K562 (cell line): ENCODE measurements at regions of chr6 and their contacts with region 1.

Region 1: DNA sequence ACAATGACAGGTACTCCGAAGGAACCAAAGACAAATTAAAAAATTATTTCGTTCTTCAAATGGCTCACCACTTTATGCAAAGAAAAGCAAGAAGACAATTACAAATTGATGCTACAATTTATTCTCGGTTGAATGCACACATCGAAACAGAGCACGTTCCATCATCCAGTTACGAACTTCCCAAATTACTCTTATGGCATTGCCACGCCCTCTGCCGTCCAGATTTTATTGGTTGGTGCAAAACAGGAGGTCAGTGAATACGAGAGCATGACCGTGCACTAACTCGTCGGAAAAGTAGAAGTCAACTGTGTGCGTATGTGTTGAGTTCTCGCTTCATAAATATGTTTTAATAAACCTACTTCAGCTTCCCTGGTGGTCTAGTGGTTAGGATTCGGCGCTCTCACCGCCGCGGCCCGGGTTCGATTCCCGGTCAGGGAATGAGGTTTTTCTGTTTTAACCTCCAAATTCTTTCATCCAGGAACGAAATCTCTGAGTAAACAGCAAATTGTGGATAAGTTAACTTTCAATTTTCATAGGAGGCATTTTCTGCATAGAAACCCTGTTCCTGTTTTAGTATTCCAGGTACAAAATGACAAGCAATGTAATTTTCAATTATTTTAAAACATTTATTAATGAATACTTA is 23.2 kb downstream of the ZNF311 start:
- DNase-seq: peak; percentile 83 to 94 (median 83)
- ATAC-seq: peak; percentile 64
- H3K4me3 ChIP-seq: peak overlapping the region; percentile 56
- H3K27ac ChIP-seq: peak overlapping the region; percentile 97
- H3K4me1 ChIP-seq: peaks cover 24 to 30% of the 10 kb centered on the region in 2 experiments
- H3K27me3 ChIP-seq: no peaks in the 10 kb centered on the region
- CTCF ChIP-seq: peak; percentile 35 to 63 (median 48); a peak in 5 of 6 replicates
- EP300 ChIP-seq: peak; percentile 79
- POLR2A ChIP-seq: no peak
- RAD21 ChIP-seq: peak; percentile 36 to 63; a peak in 3 of 4 replicates

Region 2: DNA sequence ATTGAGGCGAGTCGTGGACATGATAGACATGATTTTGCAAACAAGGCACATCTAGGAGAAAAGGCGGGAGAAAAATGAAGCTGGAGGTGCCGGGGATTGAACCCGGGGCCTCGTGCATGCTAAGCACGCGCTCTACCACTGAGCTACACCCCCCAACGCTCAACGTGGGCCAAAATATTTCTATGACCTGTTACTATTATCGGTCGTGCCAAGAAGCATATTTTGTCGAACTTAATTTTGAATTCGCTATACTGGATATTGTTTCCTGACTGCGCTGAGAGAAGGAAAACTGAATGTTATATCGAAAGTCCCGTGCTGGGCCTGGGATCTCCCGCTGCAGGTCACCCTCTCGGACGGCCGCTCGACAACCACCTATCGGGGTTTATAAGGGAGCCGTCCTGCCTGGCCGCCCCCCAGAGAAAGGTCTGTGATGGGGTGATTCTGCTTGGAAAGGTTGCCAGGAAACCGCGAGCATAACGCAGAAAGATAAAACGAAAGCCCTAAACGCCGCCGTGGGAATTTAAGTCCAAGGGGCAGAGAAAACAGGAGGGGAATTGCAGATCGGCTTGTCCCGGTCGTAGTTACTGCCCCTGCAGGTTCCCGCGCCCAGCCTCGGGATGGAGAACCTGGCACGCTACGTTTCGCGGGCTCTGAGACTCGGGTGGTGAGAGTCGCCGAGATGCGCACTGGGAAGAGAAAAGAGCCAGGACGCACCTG is 118.2 kb before region 1 on chr6:
- CTCF ChIA-PET with region 1: no interaction called
- POLR2A ChIA-PET with region 1: interaction called, 4 read pairs
- in situ Hi-C with region 1: no loop called
- intact Hi-C with region 1: loop called (anchors 5 kb)
- DNase-seq: peak; percentile 64 to 92 (median 68)
- ATAC-seq: peak; percentile 72
- H3K4me3 ChIP-seq: peak overlapping the region; percentile 64
- H3K27ac ChIP-seq: peak overlapping the region; percentile 79
- H3K4me1 ChIP-seq: peaks cover 14 to 25% of the 10 kb centered on the region in 2 experiments; a peak in 4 of 5 replicates
- H3K27me3 ChIP-seq: no peaks in the 10 kb centered on the region
- CTCF ChIP-seq: 0 out of 6 replicates have a peak, but pooled peaks of 1 of the 3 experiments have one; percentile 61
- EP300 ChIP-seq: peak; percentile 76
- POLR2A ChIP-seq: peak; percentile 54; the same call in 1 of the 2 replicates
- RAD21 ChIP-seq: peak in 1 of 2 experiments; percentile 63; a peak in 3 of 4 replicates

Region 3: DNA sequence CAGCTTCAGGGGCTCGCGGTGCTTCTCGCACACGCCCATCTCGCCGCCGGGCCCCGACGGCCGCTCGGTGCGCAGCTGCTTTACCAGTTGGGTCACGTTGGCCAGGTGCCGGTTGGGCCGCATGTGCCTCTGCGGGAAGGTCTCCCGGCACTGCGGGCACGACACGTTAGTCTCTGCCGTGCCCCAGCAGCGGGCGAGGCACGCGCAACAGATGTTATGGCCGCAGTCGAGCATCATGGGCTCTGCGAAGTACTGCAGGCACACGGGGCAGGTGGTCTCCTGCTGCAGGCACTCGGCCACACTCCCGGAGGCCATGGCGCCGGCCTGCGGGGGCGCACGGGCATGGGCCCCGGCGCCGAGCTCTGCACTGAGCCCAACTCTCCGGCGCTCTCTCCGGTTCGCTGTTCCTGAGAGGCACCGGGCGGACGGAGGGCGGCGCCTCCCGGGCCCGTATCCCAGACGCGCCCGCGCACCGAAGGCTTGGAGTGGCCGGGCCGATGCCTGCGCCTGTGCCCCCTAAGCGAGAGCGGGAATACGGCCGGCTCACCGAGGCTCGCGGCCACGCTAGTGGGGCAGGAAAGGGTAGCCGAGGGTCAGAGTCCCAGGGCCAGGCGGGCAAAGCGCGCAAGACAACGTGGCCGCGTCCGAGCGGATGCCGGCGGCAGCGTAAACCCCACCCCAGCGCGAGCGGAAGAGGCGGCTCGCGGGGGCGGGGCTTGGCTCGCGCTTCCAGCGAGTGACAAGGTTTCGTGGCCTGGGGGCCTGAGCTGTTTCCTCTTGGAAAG is 58.4 kb before region 1 on chr6 and contains the start of gene TRIM27:
- CTCF ChIA-PET with region 1: no interaction called
- POLR2A ChIA-PET with region 1: interaction called, 10 read pairs
- in situ Hi-C with region 1: no loop called
- intact Hi-C with region 1: no loop called
- DNase-seq: peak; percentile 91 to 97 (median 92)
- ATAC-seq: peak; percentile 91
- H3K4me3 ChIP-seq: peak within 1 kb of the TSS; percentile 95
- H3K27ac ChIP-seq: peak within 1 kb of the TSS; percentile 97
- H3K4me1 ChIP-seq: peaks cover 26 to 32% of the 10 kb centered on the region in 2 experiments
- H3K27me3 ChIP-seq: no peaks in the 10 kb centered on the region
- CTCF ChIP-seq: no peak
- EP300 ChIP-seq: no peak
- POLR2A ChIP-seq: peak; percentile 98
- RAD21 ChIP-seq: no peak
- polyA plus RNA-seq, gene TRIM27: 37.7 to 49.6 TPM

Region 4: GRCh38 chr6:28947831-28948270 is 34.1 kb before region 1 on chr6:
- CTCF ChIA-PET with region 1: interaction called, 12 read pairs
- POLR2A ChIA-PET with region 1: interaction called, 21 read pairs
- in situ Hi-C with region 1: loop called (anchors 5 kb)
- intact Hi-C with region 1: loop called (anchors 1 kb)
- DNase-seq: peak in 2 of 4 experiments; percentile 40 to 73
- ATAC-seq: peak; percentile 48
- H3K4me3 ChIP-seq: no peak overlapping the region
- H3K27ac ChIP-seq: peak overlapping the region; percentile 38; the same call in 2 of the 3 replicates
- H3K4me1 ChIP-seq: peaks cover 21 to 42% of the 10 kb centered on the region in 2 experiments; a peak in 4 of 5 replicates
- H3K27me3 ChIP-seq: no peaks in the 10 kb centered on the region
- CTCF ChIP-seq: no peak
- EP300 ChIP-seq: no peak
- POLR2A ChIP-seq: no peak
- RAD21 ChIP-seq: no peak

Region 5: DNA sequence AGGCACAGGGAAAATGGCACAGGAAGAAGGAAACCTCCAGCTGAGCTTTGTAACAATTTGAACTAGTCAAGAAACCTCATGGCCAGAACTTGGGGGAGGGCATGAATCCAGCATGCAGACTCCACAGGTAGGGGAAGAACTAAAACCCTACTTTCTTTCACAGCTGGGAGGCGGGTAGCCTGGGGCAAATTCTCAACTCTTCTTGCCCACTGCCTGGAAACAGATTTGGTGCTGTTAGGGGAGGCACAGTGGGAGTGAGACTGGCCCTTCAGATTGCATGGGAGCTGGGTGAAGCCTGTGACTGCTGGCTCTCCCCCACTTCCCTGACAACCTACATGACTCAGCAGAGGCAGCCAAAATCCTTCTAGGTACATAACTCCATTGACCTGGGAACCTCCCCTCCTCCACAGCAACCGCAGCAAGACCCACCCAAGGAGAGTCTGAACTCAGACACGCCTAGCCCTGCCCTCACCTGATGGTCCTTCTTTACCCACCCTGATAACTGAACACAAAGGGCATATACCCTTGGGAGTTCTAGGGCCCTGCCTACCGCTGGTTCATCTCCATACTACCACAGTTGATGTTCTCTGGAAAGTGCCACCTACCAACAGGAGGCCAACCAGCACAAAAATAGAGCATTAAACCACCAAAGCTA is 21.0 kb before region 1 on chr6:
- CTCF ChIA-PET with region 1: no interaction called
- POLR2A ChIA-PET with region 1: interaction called, 13 read pairs
- in situ Hi-C with region 1: no loop called
- intact Hi-C with region 1: loop called (anchors 1 kb)
- DNase-seq: peak in 3 of 4 experiments; percentile 42 to 96 (median 58)
- ATAC-seq: peak; percentile 91
- H3K4me3 ChIP-seq: no peak overlapping the region
- H3K27ac ChIP-seq: peak overlapping the region; percentile 93
- H3K4me1 ChIP-seq: peaks cover 15 to 31% of the 10 kb centered on the region in 2 experiments
- H3K27me3 ChIP-seq: no peaks in the 10 kb centered on the region
- CTCF ChIP-seq: no peak
- EP300 ChIP-seq: peak; percentile 82
- POLR2A ChIP-seq: peak; percentile 69
- RAD21 ChIP-seq: no peak; a peak in 1 of 4 replicates

Region 6: GRCh38 chr6:28996844-28997510 is 15.0 kb after region 1 on chr6:
- CTCF ChIA-PET with region 1: interaction called, 3 read pairs
- POLR2A ChIA-PET with region 1: interaction called, 17 read pairs
- in situ Hi-C with region 1: no loop called
- intact Hi-C with region 1: no loop called
- DNase-seq: peak; percentile 52 to 85 (median 66)
- ATAC-seq: peak; percentile 84
- H3K4me3 ChIP-seq: no peak overlapping the region; the same call in 1 of the 2 replicates
- H3K27ac ChIP-seq: peak overlapping the region; percentile 60
- H3K4me1 ChIP-seq: peaks cover 6 to 25% of the 10 kb centered on the region in 2 experiments; a peak in 3 of 5 replicates
- H3K27me3 ChIP-seq: no peaks in the 10 kb centered on the region
- CTCF ChIP-seq: no peak
- EP300 ChIP-seq: peak; percentile 85; the same call in 1 of the 2 replicates
- POLR2A ChIP-seq: no peak
- RAD21 ChIP-seq: no peak

Region 7: DNA sequence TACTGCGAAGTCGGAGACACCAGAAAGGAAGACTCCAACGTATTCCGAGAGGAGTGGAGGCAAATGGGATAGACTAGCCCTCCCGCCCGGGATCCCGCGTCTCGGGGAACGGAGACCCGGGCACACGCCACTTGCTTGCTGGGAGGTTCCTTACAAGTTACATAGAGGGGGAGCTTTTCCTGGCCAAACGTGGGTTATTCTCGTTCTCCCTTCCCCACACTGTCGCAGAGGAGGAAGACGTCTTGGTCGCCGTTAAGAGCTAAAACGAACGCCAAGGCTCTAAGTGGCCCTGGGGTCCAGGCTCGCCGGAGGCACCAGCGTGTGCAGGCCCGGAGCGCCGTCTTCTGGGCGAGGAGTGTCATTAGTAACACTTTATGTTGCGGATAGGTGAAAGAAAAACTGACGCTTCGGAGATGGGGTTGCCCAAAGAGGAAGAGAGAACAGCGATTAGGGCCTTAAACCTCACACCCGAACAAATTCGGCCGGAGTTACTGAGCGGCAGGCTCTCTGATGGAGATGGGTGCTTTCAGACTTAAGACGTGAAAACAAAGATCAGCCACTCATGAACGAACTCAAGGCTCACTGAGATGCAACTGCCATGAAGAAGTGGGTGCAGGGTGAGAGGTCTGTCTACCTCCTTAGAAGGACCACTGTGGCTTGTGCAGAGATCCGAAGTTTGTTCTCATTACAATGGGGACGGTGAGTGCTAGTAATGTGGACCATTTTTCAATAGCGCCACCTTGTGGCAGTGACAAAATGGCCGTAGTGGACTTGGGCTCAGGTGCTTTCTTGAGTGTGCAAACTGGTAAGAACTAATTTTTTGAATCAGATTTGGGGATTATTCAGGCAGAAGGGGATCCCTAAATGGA is 34.8 kb after region 1 on chr6:
- CTCF ChIA-PET with region 1: interaction called, 11 read pairs
- POLR2A ChIA-PET with region 1: interaction called, 5 read pairs
- in situ Hi-C with region 1: no loop called
- intact Hi-C with region 1: loop called (anchors 1 kb)
- DNase-seq: peak; percentile 73 to 96 (median 78)
- ATAC-seq: peak; percentile 96
- H3K4me3 ChIP-seq: peak overlapping the region; percentile 56
- H3K27ac ChIP-seq: peak overlapping the region; percentile 69
- H3K4me1 ChIP-seq: peaks cover 3 to 7% of the 10 kb centered on the region in 2 experiments; a peak in 3 of 5 replicates
- H3K27me3 ChIP-seq: no peaks in the 10 kb centered on the region
- CTCF ChIP-seq: peak; percentile 90 to 93 (median 93)
- EP300 ChIP-seq: no peak
- POLR2A ChIP-seq: no peak
- RAD21 ChIP-seq: peak; percentile 88 to 93